Gastrocnemius medialis (tissue), 4 donors: ENCODE measurements at regions of chr7 and their contacts with region 1.

Region 1: DNA sequence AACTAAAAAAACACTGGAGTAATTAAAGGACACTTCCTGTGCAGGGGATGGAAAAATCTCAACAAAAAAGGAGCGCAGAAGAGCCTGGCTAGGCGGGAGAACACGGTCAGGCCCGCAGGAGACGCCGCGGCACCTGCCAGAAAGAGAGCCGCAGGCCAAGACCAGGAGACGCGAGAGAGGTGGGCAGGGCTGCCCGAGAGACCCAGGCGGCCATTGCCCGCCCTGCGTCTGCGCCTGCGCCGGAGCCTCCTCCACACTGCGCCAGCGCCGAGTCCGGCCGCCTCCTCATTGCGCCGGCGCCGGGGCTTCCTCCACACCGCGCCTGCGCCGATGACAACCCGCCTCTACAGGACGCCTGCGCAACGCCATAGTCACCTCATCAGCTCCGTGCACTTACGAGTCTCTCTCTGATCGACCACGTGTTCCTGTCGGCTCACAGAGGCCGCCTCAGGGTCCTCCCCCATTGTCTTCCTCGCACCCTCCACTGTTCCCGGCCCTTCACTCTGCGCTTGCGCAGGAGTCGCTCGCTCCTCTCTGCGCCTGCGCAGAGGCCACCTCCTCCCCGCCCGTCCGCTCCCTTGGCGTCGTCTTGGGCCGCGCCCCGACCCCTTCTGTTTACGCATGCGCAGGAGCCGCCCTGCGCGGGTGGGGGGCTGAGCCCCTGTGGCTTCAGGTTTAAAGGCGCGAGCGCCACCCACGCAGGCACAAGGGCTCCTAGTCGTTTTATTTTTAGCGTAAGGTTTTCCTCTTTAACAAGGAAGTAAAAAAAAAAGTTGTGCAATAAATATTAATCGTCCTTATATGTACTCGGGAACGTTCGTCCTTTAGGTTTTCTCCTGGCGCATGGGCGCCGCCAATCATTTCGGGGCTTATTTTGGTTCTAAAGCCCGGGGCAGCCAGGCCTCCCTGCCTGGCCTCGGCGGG is 43.2 kb upstream of the FAM20C start:
- DNase-seq: peak; percentile 97 to 98
- ATAC-seq: peak; percentile 96 to 98
- H3K4me3 ChIP-seq: peak overlapping the region; percentile 54 to 81 (median 64)
- H3K27ac ChIP-seq: peak overlapping the region; percentile 92 to 98 (median 95)
- H3K4me1 ChIP-seq: peaks cover 5 to 15% of the 10 kb centered on the region in 2 donors
- H3K27me3 ChIP-seq: no peaks in the 10 kb centered on the region
- CTCF ChIP-seq: no peak
- POLR2A ChIP-seq: peak; percentile 69 to 86

Region 2: GRCh38 chr7:159370-160270 is 10.4 kb after region 1 on chr7:
- in situ Hi-C with region 1: no loop called
- intact Hi-C with region 1: loop called (anchors 1 kb)
- DNase-seq: no peak
- ATAC-seq: no peak
- H3K4me3 ChIP-seq: peak overlapping the region in 1 of 4 donors; percentile 9
- H3K27ac ChIP-seq: no peak overlapping the region
- H3K4me1 ChIP-seq: peaks cover 7 to 9% of the 10 kb centered on the region in 2 donors
- H3K27me3 ChIP-seq: no peaks in the 10 kb centered on the region
- CTCF ChIP-seq: no peak
- POLR2A ChIP-seq: no peak

Region 3: DNA sequence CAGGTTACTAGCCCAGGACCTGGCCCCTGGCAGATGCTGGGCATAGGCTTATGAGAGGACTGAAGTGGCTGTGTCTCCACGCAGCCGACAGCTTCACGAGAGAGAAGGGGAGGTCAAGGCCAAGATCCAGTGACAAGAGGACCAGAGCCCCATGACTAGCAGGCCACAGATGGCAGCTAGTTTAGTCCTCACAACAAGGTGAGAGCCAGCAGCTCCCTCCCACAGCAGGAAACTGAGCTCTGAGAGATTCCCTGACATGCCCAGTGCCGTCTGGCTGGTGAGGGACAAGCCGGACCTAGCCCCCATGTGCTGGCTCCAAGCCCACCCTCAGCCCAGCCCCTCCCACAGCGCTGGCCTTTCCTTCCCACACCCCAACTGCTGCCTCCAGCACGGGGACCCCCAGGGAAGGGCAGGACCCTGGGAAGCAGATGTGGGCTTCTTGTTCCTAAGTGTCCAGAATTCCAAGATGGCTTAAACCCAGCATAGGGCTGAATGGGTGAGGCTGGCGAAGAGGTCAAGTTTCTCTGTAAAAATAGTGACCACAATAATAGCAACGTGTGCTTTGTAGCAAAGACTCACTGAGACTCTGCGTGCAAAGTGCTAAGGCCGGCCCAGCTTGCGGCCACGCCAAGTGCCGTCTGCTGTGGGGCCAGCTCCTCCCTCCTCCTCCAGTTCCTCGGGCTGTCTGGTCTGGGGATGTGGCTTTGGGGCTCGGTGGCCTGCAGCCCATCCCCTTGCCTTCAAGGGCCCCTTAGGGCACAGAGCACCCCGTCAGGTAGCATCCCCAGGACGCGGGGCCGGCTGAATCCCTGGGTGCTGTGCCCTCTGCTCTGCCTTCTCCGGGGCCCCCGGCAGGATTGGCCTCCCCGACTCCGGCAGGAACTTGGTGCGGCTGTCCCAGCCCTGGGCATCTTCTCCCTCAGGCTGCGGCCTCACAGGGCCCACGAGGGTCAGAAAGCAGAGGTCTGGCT is 35.4 kb after region 1 on chr7:
- in situ Hi-C with region 1: no loop called
- intact Hi-C with region 1: loop called (anchors 2 kb)
- DNase-seq: peak; percentile 65 to 72
- ATAC-seq: peak; percentile 68 to 78
- H3K4me3 ChIP-seq: peak overlapping the region in 1 of 4 donors; percentile 9
- H3K27ac ChIP-seq: peak overlapping the region; percentile 78 to 94 (median 82)
- H3K4me1 ChIP-seq: peaks cover 40 to 42% of the 10 kb centered on the region in 2 donors
- H3K27me3 ChIP-seq: no peaks in the 10 kb centered on the region
- CTCF ChIP-seq: no peak
- POLR2A ChIP-seq: peak in 1 of 2 donors; percentile 40

Region 4: DNA sequence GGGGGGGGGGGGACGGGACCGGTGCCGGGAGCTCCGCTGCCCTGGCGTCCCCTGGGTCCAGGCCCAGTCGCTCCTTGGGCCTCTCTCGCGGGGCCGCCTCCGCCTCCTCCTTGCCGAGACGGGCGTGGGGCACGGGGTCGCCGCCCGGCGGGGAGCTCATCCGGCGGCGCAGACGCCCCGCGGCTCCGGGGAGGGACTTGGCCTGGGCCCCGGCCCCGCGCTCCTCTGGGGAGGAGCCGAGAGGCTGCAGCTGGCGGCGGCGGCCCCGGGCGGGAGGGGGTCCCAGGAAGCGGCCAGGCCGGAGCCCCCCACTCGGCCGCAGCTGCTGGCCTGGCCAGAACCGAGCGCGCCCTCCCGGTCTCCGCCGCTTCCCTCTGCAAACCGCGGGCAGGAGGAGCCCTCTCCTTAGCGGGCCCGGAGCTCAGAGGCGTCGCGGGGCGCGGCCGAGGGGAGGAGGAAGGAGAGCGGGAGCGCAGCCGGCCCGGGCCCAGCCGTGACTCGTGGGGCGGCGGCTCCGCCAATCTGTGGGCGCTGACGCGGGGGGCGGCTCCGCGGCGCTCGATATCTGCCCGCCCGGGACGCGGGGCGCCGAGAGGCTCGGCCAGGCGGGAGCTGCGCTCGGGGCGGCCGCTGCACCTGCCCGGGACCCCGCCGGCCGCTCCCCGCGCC is 42.9 kb after region 1 on chr7 and contains the start of gene FAM20C:
- in situ Hi-C with region 1: no loop called
- intact Hi-C with region 1: loop called (anchors 2 kb)
- DNase-seq: peak; percentile 80 to 83
- ATAC-seq: peak; percentile 67 to 68
- H3K4me3 ChIP-seq: peak within 1 kb of the TSS; percentile 61 to 89 (median 68)
- H3K27ac ChIP-seq: peak within 1 kb of the TSS; percentile 85 to 98 (median 91)
- H3K4me1 ChIP-seq: peaks cover 51 to 52% of the 10 kb centered on the region in 2 donors
- H3K27me3 ChIP-seq: no peaks in the 10 kb centered on the region
- CTCF ChIP-seq: no peak
- POLR2A ChIP-seq: peak; percentile 94 to 96
- total RNA-seq, gene FAM20C: 9.6 to 35.3 (median 18.6) TPM

Region 5: GRCh38 chr7:234655-235578 is 85.7 kb after region 1 on chr7:
- in situ Hi-C with region 1: no loop called
- intact Hi-C with region 1: loop called (anchors 5 kb)
- DNase-seq: peak; percentile 80 to 82
- ATAC-seq: peak; percentile 72 to 83
- H3K4me3 ChIP-seq: peak overlapping the region; percentile 34 to 45 (median 41)
- H3K27ac ChIP-seq: peak overlapping the region; percentile 92 to 96 (median 92)
- H3K4me1 ChIP-seq: peaks cover 65 to 67% of the 10 kb centered on the region in 2 donors
- H3K27me3 ChIP-seq: no peaks in the 10 kb centered on the region
- CTCF ChIP-seq: no peak
- POLR2A ChIP-seq: peak in 1 of 2 donors; percentile 9

Region 6: GRCh38 chr7:260441-261281 is 111.5 kb after region 1 on chr7:
- in situ Hi-C with region 1: no loop called
- intact Hi-C with region 1: no loop called
- DNase-seq: no peak
- ATAC-seq: no peak
- H3K4me3 ChIP-seq: no peak overlapping the region
- H3K27ac ChIP-seq: no peak overlapping the region
- H3K4me1 ChIP-seq: no peaks in the 10 kb centered on the region
- H3K27me3 ChIP-seq: no peaks in the 10 kb centered on the region
- CTCF ChIP-seq: no peak
- POLR2A ChIP-seq: no peak

Region 7: DNA sequence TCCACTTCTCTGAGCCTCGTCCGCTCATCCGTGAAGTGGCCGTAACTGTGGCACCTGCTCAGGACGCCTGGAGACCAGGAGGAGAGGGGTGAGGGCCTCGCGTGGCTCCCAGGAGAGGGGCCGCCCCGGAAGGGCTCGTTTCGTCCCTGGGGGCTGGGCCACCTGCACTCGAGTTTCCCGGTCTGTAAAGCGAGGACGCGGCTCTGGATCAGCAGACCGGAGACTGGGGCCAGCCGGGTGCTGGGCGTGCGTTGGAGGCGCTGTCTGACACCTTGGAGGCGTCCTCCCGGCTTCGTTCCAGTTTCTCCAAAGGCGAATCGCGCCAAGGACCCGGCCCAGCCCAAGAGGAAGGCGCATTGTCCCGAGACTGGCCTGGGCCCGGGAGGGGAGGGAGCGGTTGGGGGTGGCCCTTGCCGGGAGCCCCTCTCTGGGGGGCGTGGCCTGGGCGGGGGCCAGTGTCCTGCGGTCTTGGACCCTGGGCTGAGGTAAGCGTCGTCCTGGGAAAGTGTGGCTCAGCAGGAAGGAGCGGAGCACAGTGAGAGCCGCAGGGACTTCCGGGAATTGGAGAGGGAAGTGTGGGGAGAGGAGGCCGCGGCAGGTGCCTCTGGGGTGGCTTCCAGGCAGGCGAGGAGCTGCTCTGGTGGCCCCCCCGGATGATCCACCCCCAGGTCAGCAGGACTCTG is 230.4 kb after region 1 on chr7:
- in situ Hi-C with region 1: no loop called
- intact Hi-C with region 1: no loop called
- DNase-seq: no peak
- ATAC-seq: peak in 1 of 2 donors; percentile 30
- H3K4me3 ChIP-seq: peak overlapping the region; percentile 48 to 54 (median 50)
- H3K27ac ChIP-seq: no peak overlapping the region
- H3K4me1 ChIP-seq: peaks cover 7 to 13% of the 10 kb centered on the region in 2 donors
- H3K27me3 ChIP-seq: peaks cover 0 to 32% (median 3%) of the 10 kb centered on the region in 3 donors
- CTCF ChIP-seq: no peak
- POLR2A ChIP-seq: no peak